Activated T-helper 2 cell treated with anti-CD3 and anti-CD28 coated beads, Interferon-gamma antibody, Interleukin-2, Interleukin-4, amounts not matched to agents 10 μg/mL and 5 μg/mL and 100 μg/mL, durations not matched to agents 14 hours and 24 hours and 36 hours (primary cell): ENCODE measurements at regions of chr9 and their contacts with region 1.

Region 1: DNA sequence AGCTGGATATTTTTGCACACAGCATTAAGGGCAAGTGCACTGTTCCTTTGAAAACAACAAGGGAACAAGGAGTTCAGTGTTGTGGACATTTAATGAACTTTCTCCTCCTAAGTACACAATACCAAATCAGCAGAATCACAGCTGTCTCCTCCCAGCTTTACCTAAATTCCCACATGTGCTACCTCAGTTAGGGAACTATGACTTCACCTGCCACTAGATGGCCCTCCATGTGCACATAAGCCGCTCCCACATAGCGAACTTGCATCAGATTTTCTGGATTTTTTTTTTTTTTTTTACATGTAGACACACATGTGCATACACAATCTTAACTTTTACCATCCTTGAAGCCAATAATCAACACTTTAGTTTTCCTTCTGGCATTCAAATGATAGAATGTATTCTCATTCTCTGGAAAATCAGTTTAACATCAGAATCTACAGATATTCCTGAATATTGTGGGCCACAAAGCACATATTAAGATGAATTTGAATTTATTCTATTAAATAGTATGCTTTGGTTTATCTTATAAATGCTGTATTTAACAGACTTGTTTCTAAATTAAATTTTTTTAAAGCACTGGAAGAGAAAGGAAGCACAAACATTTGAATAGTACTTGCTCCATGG is 123.6 kb downstream of the PALM2AKAP2 start:
- DNase-seq: peak; percentile 59
- H3K4me3 Mint-ChIP-seq: no peak overlapping the region
- H3K27ac Mint-ChIP-seq: no peak overlapping the region
- H3K4me1 Mint-ChIP-seq: peaks cover 29% of the 10 kb centered on the region
- H3K27me3 Mint-ChIP-seq: no peaks in the 10 kb centered on the region

Region 2: GRCh38 chr9:109831998-109832658 is 71.5 kb before region 1 on chr9:
- intact Hi-C with region 1: no loop called
- DNase-seq: no peak
- H3K4me3 Mint-ChIP-seq: no peak overlapping the region
- H3K27ac Mint-ChIP-seq: no peak overlapping the region
- H3K4me1 Mint-ChIP-seq: no peaks in the 10 kb centered on the region
- H3K27me3 Mint-ChIP-seq: peaks cover 17% of the 10 kb centered on the region

Region 3: DNA sequence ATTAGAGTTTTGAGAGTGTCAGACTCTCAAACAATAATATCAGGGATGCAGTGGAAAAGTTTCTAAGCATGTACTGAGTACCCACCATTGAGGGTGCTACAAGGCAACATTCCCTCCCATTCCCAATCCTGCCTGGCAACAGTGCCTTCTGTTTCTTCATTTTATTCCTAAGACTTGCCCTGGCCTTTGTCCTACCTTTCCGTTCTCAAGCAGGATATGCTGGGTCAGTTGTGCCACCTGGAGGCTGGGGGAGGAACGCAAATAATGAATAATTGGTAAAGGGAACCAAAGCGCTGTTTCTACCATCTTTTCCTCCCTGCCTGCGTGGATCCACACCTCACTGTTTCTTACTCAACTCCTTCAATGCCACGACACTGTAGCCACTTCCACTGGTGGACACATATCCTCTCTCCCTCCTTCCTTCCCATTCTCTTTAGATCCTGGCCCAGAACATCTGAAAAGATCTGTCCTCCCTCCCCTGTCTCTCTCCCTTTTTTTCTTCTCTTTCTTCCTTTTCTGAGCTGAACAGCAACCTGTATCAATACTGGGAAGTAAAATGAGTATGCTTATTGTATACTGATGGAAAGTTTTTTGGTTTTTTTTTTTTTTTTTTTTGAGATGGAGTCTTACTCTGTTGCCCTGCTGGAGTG is 154.8 kb after region 1 on chr9:
- intact Hi-C with region 1: loop called (anchors 1 kb)
- DNase-seq: peak; percentile 40
- H3K4me3 Mint-ChIP-seq: no peak overlapping the region
- H3K27ac Mint-ChIP-seq: peak overlapping the region; percentile 69
- H3K4me1 Mint-ChIP-seq: peaks cover 53% of the 10 kb centered on the region
- H3K27me3 Mint-ChIP-seq: no peaks in the 10 kb centered on the region

Region 4: GRCh38 chr9:110152704-110153374 is 249.2 kb after region 1 on chr9:
- intact Hi-C with region 1: loop called (anchors 1 kb)
- DNase-seq: no peak
- H3K4me3 Mint-ChIP-seq: peak overlapping the region; percentile 37
- H3K27ac Mint-ChIP-seq: peak overlapping the region; percentile 77
- H3K4me1 Mint-ChIP-seq: peaks cover 95% of the 10 kb centered on the region
- H3K27me3 Mint-ChIP-seq: no peaks in the 10 kb centered on the region